ENCODE measurements at regions of chr14 and their contacts with region 1.

Region 1: GRCh38 chr14:24351517-24351916 is 11.7 kb upstream of the RIPK3 start:
- DNase-seq: no peak
- ATAC-seq: no peak
- H3K4me3 Mint-ChIP-seq: no peak overlapping the region
- H3K27ac Mint-ChIP-seq: no peak overlapping the region
- H3K4me1 Mint-ChIP-seq: no peaks in the 10 kb centered on the region
- H3K27me3 Mint-ChIP-seq: peaks cover 55% of the 10 kb centered on the region

Region 2: DNA sequence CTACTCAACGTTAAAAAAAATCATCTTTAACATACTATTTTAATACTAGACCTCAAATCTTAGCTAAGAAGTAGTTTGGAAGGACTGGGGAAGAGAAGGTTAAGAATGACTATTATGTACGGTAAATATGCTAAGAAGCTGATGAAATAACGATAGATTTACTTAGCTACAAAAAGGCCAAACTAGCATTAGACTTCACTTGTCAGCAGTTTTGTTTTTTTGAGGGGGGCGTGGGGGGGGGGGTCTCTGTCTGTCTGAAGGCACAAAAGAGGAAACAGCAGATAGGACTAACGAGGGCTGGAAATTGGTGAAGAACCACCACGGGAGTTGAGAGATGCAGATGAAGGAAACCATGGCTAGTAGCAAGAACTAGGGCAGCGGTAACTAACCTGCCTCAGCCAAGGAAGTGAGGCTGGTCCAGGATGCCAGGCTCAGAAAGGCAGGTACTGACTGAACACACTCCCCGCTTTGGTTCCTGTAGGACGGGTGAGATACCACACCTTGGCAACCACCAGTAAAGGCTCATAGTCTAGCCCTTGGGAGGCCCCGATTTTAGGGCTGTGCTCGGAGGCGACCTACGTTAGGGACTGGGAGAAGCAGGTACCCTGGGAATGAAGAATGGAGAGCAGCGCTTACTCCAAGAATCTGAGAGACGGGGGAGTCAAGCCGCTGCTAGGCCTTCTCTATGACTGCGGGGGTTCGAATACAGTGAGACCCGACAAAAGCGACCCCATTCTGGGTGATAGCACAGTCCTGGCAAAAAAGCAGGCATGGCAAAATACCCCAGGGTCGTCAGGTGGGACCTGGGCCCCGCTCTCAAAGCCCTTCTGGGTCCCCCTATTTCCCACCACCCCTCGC is 120.0 kb before region 1 on chr14:
- CTCF ChIA-PET with region 1: no interaction called
- DNase-seq: peak; percentile 65
- ATAC-seq: peak; percentile 26
- H3K4me3 Mint-ChIP-seq: peak overlapping the region; percentile 84
- H3K27ac Mint-ChIP-seq: peak overlapping the region; percentile 95
- H3K4me1 Mint-ChIP-seq: peaks cover 55% of the 10 kb centered on the region
- H3K27me3 Mint-ChIP-seq: no peaks in the 10 kb centered on the region

Region 3: DNA sequence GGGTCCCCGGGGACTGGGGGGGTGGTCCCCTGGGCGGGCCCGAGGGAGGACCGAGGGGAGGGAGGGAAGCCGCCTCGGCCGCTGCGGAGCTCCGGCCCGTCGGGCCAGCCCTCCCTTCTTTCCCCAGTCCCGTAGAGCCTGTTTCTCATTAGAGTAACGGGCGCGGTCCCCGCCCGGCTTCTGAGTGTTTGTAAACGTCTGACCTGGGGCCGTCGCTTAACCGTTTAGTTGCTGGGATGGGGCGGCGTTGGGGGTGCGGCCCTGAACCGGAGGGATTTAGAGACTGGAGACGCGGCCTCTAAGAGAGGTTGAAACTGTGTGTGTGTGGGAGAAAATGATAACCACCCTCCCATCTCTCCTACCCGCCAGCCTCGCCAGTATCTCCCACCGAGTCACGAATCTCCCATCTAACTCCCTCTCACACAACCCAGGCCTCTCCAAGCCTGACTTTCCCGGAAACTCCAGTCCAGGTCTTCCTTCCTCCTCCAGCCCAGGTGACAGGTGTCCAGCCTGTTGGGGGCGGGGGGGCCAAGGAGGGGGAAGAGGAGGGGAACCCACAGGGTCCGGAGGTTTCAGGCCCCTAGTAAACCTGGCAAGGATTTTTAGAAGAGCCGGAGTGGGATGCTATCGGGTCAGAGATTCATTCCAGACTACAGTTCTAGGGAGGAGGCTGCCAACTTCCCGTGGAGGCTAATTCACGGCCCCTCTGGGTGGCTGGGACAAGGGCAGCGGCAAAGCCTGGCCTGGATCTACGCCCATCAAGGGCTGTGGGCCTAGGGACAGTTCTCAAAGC is 15.4 kb after region 1 on chr14:
- CTCF ChIA-PET with region 1: interaction called, 11 read pairs
- DNase-seq: no peak
- ATAC-seq: no peak
- H3K4me3 Mint-ChIP-seq: no peak overlapping the region
- H3K27ac Mint-ChIP-seq: no peak overlapping the region
- H3K4me1 Mint-ChIP-seq: peaks cover 24% of the 10 kb centered on the region
- H3K27me3 Mint-ChIP-seq: peaks cover 61% of the 10 kb centered on the region